Posterior vena cava (tissue), 2 donors: ENCODE measurements at regions of chr7 and their contacts with region 1.

Region 1: GRCh38 chr7:144086730-144087129 is 652 bp downstream of the OR2A12 start:
- DNase-seq: no peak

Region 2: DNA sequence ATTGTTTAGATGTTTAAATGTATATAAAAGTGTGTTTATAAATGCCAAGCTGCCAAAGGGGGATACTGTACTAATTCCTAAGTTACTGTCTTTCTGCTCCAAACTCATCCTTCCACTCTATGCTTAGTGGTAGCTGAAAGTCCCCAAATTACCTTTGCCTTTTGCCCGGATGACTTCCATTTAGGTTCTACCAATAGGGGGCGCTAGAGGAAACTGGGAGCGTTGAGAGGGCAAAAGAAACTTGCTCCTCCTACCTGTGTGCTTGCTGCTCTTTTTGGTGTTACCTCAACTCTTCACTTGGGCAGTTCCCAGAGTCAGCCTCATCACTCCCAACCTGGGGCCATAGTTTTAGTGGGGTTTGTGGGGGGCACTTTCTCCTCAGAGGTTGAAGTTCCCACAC is 23.0 kb before region 1 on chr7:
- intact Hi-C with region 1: no loop called
- DNase-seq: no peak

Region 3: DNA sequence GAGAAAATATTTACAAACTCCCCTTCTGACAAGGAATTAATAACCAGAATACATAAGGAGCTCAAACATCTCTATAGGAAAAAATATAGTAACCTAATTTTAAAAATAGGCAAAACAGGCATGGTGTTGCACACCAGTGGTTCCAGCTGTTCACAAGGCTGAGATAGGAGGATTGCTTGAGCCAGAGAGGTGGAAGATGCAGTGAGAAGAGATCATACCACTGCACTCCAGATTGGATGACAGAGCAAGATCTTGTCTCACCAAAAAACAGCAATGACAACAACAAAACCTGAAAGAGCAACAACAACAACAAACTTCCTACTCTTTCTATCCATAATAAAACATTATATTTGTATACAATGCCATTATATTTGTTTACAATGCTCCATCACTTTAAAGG is 1725.5 kb after region 1 on chr7:
- intact Hi-C with region 1: loop called in 1 of 2 experiments (anchors 5 kb)
- DNase-seq: no peak